H1 (cell line): ENCODE measurements at regions of chr3 and their contacts with region 1.

Region 1: GRCh38 chr3:13623099-13623654 is 74.3 kb downstream of the FBLN2 start:
- DNase-seq: no peak
- H3K4me3 ChIP-seq: no peak overlapping the region
- H3K27ac ChIP-seq: no peak overlapping the region
- H3K4me1 ChIP-seq: peaks cover 0 to 7% (median 3%) of the 10 kb centered on the region in 4 experiments; a peak in 3 of 7 replicates
- H3K27me3 ChIP-seq: no peaks in the 10 kb centered on the region
- CTCF ChIP-seq: no peak
- EP300 ChIP-seq: no peak
- POLR2A ChIP-seq: no peak
- RAD21 ChIP-seq: no peak

Region 2: GRCh38 chr3:13452490-13453335 is 170.5 kb before region 1 on chr3:
- CTCF ChIA-PET with region 1: no interaction called
- POLR2A ChIA-PET with region 1: no interaction called
- DNase-seq: no peak
- H3K4me3 ChIP-seq: peak overlapping the region in 1 of 4 experiments; percentile 57; a peak in 2 of 8 replicates
- H3K27ac ChIP-seq: no peak overlapping the region
- H3K4me1 ChIP-seq: peaks cover 2 to 5% (median 4%) of the 10 kb centered on the region in 4 experiments; a peak in 5 of 7 replicates
- H3K27me3 ChIP-seq: no peaks in the 10 kb centered on the region
- CTCF ChIP-seq: peak in 2 of 3 experiments; percentile 43 to 48; a peak in 2 of 4 replicates
- EP300 ChIP-seq: no peak
- POLR2A ChIP-seq: no peak
- RAD21 ChIP-seq: peak; percentile 65 to 68

Region 3: DNA sequence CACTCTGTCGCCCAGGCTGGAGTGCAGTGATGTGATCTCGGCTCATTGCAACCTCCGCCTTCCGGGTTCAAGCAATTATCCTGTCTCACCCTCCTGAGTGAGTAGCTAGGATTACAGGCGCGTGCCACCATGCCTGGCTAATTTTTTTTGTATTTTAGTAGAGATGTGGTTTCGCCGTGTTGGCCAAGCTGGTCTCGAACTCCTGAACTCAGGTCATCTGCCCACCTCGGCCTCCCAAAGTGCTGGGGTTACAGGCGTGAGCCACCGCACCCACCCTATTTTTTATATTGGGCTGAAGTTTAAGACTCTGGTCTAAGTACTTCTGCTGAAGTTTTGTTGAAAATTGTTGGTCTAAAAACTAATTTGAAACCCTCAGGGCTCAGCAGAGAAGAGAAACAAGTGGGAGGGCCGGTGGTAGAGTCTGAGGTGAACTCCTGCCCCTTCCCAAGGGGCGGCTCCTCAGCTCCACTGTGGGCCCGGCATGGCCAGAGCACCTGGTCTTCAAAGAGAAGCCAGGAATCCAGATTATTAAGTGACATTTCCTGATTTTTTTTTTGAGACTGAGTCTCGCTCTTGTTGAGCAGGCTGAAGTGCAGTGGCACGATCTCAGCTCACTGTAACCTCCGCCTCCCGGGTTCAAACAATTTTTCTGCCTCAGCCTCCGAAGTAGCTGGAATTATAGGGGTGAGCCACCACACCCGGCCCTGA is 139.0 kb before region 1 on chr3:
- CTCF ChIA-PET with region 1: no interaction called
- POLR2A ChIA-PET with region 1: no interaction called
- DNase-seq: no peak
- H3K4me3 ChIP-seq: no peak overlapping the region
- H3K27ac ChIP-seq: no peak overlapping the region
- H3K4me1 ChIP-seq: peaks cover 0 to 12% (median 6%) of the 10 kb centered on the region in 4 experiments; a peak in 3 of 7 replicates
- H3K27me3 ChIP-seq: peaks cover 0 to 9% (median 4%) of the 10 kb centered on the region in 4 experiments; a peak in 5 of 7 replicates
- CTCF ChIP-seq: no peak
- EP300 ChIP-seq: no peak
- POLR2A ChIP-seq: no peak
- RAD21 ChIP-seq: no peak

Region 4: DNA sequence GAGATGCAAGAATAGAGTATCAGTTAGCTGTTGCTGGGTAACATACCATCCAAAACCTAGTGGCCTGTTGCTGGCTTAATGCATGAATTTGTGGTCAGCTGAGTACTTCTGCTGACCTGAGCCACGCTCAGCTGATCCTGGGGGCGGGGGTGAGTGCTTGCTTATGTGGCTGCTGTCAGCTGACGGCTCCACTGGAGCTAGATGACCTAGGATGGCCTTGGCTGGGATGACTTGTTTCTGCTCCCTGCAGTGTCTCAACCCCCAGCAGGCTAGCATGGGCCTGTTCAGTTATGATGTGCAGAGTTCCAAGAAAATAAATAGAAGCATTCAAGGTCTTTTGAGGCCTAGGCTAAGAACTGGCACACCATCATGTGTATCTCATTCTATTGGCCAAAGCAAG is 10.3 kb before region 1 on chr3:
- CTCF ChIA-PET with region 1: interaction called, 11 read pairs
- POLR2A ChIA-PET with region 1: no interaction called
- DNase-seq: no peak
- H3K4me3 ChIP-seq: no peak overlapping the region
- H3K27ac ChIP-seq: no peak overlapping the region
- H3K4me1 ChIP-seq: no peaks in the 10 kb centered on the region
- H3K27me3 ChIP-seq: no peaks in the 10 kb centered on the region
- CTCF ChIP-seq: no peak
- EP300 ChIP-seq: no peak
- POLR2A ChIP-seq: no peak
- RAD21 ChIP-seq: no peak

Region 5: DNA sequence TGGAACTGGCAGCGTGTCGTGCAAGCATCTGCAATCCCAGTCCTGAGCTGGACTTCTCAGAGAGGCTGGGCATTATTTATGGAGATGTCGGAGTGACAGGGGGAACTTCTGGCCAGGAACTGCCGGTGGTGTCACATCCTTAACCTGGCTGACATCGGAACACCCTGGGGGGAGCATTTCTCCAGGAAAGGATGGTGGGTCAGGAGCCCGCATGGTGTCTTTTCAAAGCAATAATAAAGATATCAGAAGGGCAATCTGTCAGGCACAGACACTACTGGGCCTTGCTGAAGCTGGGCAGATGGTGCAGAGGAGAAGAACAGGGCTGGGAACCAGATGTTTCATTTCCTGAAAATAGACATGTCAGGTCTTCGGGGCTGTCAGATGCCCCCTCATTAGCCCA is 123.2 kb after region 1 on chr3:
- CTCF ChIA-PET with region 1: no interaction called
- POLR2A ChIA-PET with region 1: no interaction called
- DNase-seq: no peak
- H3K4me3 ChIP-seq: no peak overlapping the region
- H3K27ac ChIP-seq: no peak overlapping the region
- H3K4me1 ChIP-seq: no peaks in the 10 kb centered on the region
- H3K27me3 ChIP-seq: no peaks in the 10 kb centered on the region
- CTCF ChIP-seq: no peak
- EP300 ChIP-seq: no peak
- POLR2A ChIP-seq: no peak
- RAD21 ChIP-seq: no peak